ENCODE measurements at regions of chr4 and their contacts with region 1.

Region 1: GRCh38 chr4:20684852-20685763 is 15.2 kb upstream of the PACRGL start:
- DNase-seq: no peak

Region 2: GRCh38 chr4:18689308-18690115 is 1995.6 kb before region 1 on chr4:
- intact Hi-C with region 1: loop called (anchors 10 kb)
- DNase-seq: no peak

Region 3: GRCh38 chr4:19224820-19225219 is 1460.3 kb before region 1 on chr4:
- intact Hi-C with region 1: loop called (anchors 10 kb)
- DNase-seq: no peak

Region 4: GRCh38 chr4:20422398-20422797 is 262.7 kb before region 1 on chr4:
- intact Hi-C with region 1: loop called (anchors 2 kb)
- DNase-seq: no peak

Measured in cardiac septum (tissue), 1 donor.